T-cell (primary cell): ENCODE measurements at regions of chr11 and their contacts with region 1.

Region 1: DNA sequence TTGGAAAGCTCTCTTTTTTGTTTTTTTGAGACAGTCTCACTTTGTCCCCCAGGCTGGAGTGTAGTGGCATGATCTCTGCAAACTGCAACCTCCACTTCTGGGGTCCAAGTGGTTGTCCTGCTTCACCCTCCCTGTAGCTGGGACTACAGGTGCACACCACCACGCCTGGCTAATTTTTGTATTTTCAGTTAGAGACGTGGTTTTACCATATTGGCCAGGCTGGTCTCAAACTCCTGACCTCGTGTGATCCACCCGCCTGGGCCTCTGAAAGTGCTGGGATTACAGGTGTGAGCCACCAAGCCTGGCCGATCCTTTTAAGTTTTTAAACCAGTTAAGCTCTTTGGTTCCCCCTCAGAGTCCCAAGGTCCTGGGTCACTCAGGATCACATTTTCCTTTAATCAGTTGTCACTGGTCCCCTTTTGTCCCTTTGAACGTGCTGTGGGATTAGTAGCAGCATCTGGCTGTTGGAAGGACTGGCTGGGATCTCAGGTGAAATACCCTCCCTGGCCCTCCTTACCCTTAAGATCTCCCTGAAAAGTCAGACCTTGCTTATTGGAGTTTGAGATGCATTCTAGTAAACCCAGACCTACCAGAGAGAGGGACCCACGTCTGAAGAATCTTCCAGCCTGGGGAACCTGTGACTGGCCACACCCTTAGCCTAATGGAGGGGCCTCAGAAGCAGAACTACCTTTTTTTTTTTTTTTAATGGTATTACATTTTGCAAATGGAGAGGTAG is 8.1 kb downstream of the MALAT1 start:
- DNase-seq: peak in 6 of 35 experiments; percentile 21 to 59 (median 48)
- ATAC-seq: peak; percentile 16 to 40 (median 22)
- H3K4me3 ChIP-seq: no peak overlapping the region
- H3K4me3 Mint-ChIP-seq: no peak overlapping the region
- H3K27ac ChIP-seq: peak overlapping the region; percentile 12
- H3K27ac Mint-ChIP-seq: peak overlapping the region; percentile 53 to 87
- H3K4me1 ChIP-seq: peaks cover 37 to 40% of the 10 kb centered on the region in 2 experiments
- H3K4me1 Mint-ChIP-seq: peaks cover 51 to 64% (median 53%) of the 10 kb centered on the region in 3 donors
- H3K27me3 ChIP-seq: no peaks in the 10 kb centered on the region
- H3K27me3 Mint-ChIP-seq: no peaks in the 10 kb centered on the region

Region 2: DNA sequence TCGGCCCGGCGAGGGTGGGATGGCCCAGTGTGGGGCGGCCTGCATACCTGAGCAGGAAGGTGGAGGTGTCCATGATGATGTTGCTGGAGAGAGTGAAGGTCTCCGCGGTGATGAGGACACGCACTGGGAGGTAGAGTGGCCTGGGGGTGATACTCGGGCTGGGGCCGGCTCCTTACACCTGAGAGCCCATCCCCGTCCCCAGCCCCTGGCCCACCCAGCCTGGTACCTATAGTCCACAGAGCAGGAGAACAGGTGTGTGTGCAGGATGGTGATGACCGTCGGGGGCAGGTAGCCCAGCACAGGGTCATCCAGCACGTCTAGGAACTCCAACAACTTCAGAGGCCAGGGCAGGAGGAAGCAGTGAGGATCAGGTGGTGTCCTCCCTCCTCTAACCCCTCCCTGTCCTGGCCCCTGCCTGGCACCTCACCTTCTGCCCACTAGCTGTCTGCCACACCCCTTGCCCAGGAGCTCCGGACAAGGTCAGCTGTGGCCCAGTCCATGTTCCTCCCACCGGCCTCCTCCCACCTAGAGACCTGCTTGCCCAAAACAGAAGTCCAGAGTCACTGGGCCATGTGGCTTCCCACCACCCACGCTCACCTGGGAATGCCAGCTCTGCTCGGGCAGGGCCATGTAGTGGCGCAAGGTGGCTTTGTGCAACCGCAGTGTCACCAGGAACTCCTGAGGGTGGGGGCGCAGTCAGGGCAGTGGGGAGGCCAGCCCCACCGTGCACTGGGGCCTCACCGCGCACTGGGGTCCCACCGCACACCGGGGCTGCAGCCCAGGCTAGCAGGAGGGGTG is 601.2 kb before region 1 on chr11:
- CTCF ChIA-PET with region 1: no interaction called
- POLR2A ChIA-PET with region 1: no interaction called
- DNase-seq: no peak
- ATAC-seq: no peak
- H3K4me3 ChIP-seq: no peak overlapping the region
- H3K4me3 Mint-ChIP-seq: no peak overlapping the region
- H3K27ac ChIP-seq: no peak overlapping the region
- H3K27ac Mint-ChIP-seq: no peak overlapping the region
- H3K4me1 ChIP-seq: peaks cover 0 to 3% of the 10 kb centered on the region in 2 experiments
- H3K4me1 Mint-ChIP-seq: peaks cover 7 to 11% (median 11%) of the 10 kb centered on the region in 3 donors
- H3K27me3 ChIP-seq: no peaks in the 10 kb centered on the region
- H3K27me3 Mint-ChIP-seq: no peaks in the 10 kb centered on the region

Region 3: DNA sequence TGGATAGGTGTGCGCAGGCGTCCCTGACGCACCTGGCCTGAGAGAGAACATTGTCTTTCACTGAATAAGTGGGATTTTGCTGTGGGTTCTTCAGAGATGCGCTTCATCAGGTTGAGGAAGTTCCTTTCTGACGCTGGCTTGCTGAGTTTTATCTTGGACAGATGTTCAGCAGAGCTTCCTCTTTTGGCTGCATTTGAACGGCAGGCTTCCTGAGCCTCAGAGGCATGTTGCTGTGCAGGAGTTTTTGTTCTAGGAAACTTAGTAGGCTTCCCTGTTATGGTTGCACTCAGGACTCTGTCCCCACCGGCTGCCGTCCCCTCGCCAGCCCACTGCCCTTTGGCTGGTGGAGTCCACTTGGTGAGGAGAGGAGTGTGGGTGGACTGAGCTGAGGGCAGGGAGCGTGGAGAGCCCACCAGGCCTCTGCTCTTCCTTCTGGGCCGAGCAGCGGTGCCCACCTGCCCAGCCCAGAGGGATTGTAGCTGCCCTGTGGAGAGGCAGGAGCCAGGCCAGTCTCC is 103.3 kb before region 1 on chr11:
- CTCF ChIA-PET with region 1: no interaction called
- POLR2A ChIA-PET with region 1: no interaction called
- DNase-seq: no peak
- ATAC-seq: peak in 2 of 4 experiments; percentile 27 to 57
- H3K4me3 ChIP-seq: no peak overlapping the region
- H3K4me3 Mint-ChIP-seq: no peak overlapping the region
- H3K27ac ChIP-seq: no peak overlapping the region
- H3K27ac Mint-ChIP-seq: peak overlapping the region; percentile 19 to 75
- H3K4me1 ChIP-seq: peaks cover 3 to 9% of the 10 kb centered on the region in 2 experiments
- H3K4me1 Mint-ChIP-seq: peaks cover 0 to 9% (median 4%) of the 10 kb centered on the region in 3 donors
- H3K27me3 ChIP-seq: no peaks in the 10 kb centered on the region
- H3K27me3 Mint-ChIP-seq: no peaks in the 10 kb centered on the region

Region 4: DNA sequence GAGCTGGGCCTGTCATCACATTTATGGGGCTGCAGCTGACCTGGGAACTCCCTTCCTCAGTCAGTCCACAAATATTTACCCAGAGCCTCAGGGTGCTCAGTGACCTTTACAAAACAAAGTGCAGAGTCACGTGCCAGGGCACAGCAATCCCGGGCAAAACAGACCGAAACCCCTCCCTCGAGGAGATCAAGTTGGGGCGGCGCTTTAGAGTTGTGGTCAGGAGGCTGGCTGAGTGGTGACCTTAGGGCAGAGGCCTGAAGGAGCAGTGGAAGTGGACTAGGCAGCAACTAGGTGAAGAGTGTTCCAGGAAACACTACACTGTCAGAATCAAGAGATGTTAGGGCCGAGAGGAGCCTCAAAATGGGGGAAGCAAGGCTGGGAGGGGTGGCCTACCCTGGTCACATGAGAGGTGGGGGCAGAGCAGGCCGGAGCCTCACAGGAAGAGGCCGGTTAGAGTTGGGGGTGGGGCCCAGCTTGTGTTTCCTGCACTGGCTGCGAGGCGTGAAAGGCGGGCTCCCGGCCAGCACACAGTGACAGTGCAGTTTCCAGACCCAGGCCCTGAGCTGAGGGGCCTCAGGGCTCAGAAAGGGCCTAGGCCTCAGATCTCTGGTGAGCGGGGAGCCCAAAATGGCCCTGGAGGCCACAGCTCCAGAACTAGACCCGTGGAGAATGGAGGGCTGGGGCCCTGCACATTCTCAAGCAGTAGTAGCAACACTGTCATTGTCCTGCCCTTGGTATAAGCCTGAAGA is 88.1 kb before region 1 on chr11:
- CTCF ChIA-PET with region 1: interaction called, 4 to 56 read pairs
- POLR2A ChIA-PET with region 1: interaction called, 13 to 306 read pairs
- DNase-seq: peak; percentile 50 to 84 (median 69)
- ATAC-seq: peak; percentile 3 to 33 (median 18)
- H3K4me3 ChIP-seq: peak overlapping the region; percentile 72 to 92
- H3K4me3 Mint-ChIP-seq: peak overlapping the region; percentile 91 to 100 (median 98)
- H3K27ac ChIP-seq: peak overlapping the region; percentile 95
- H3K27ac Mint-ChIP-seq: peak overlapping the region; percentile 98 to 99
- H3K4me1 ChIP-seq: peaks cover 50 to 79% of the 10 kb centered on the region in 2 experiments
- H3K4me1 Mint-ChIP-seq: peaks cover 53 to 77% (median 62%) of the 10 kb centered on the region in 3 donors
- H3K27me3 ChIP-seq: no peaks in the 10 kb centered on the region
- H3K27me3 Mint-ChIP-seq: no peaks in the 10 kb centered on the region

Region 5: GRCh38 chr11:65425105-65425970 is 81.6 kb before region 1 on chr11:
- CTCF ChIA-PET with region 1: interaction called in 1 of 2 experiments, 30 read pairs
- POLR2A ChIA-PET with region 1: interaction called, 13 to 306 read pairs
- DNase-seq: peak; percentile 55 to 96 (median 87)
- ATAC-seq: peak; percentile 46 to 63 (median 50)
- H3K4me3 ChIP-seq: peak overlapping the region; percentile 92 to 95
- H3K4me3 Mint-ChIP-seq: peak overlapping the region; percentile 91 to 100 (median 98)
- H3K27ac ChIP-seq: peak overlapping the region; percentile 95
- H3K27ac Mint-ChIP-seq: peak overlapping the region; percentile 98 to 99
- H3K4me1 ChIP-seq: peaks cover 69 to 76% of the 10 kb centered on the region in 2 experiments
- H3K4me1 Mint-ChIP-seq: peaks cover 52 to 90% (median 53%) of the 10 kb centered on the region in 3 donors
- H3K27me3 ChIP-seq: no peaks in the 10 kb centered on the region
- H3K27me3 Mint-ChIP-seq: no peaks in the 10 kb centered on the region

Region 6: GRCh38 chr11:65487413-65488272 is 19.3 kb before region 1 on chr11:
- CTCF ChIA-PET with region 1: interaction called in 1 of 2 experiments, 11 read pairs
- POLR2A ChIA-PET with region 1: interaction called, 3 to 5 read pairs
- DNase-seq: peak in 2 of 35 experiments; percentile 17 to 33
- ATAC-seq: peak in 3 of 4 experiments; percentile 20 to 74 (median 21)
- H3K4me3 ChIP-seq: no peak overlapping the region
- H3K4me3 Mint-ChIP-seq: peak overlapping the region in 1 of 3 donors; percentile 48
- H3K27ac ChIP-seq: no peak overlapping the region
- H3K27ac Mint-ChIP-seq: no peak overlapping the region
- H3K4me1 ChIP-seq: peaks cover 3 to 25% of the 10 kb centered on the region in 2 experiments
- H3K4me1 Mint-ChIP-seq: peaks cover 17 to 39% (median 29%) of the 10 kb centered on the region in 3 donors
- H3K27me3 ChIP-seq: peaks cover 0 to 18% of the 10 kb centered on the region in 2 experiments
- H3K27me3 Mint-ChIP-seq: no peaks in the 10 kb centered on the region